ENCODE measurements at regions of chr15 and their contacts with region 1.

Region 1: DNA sequence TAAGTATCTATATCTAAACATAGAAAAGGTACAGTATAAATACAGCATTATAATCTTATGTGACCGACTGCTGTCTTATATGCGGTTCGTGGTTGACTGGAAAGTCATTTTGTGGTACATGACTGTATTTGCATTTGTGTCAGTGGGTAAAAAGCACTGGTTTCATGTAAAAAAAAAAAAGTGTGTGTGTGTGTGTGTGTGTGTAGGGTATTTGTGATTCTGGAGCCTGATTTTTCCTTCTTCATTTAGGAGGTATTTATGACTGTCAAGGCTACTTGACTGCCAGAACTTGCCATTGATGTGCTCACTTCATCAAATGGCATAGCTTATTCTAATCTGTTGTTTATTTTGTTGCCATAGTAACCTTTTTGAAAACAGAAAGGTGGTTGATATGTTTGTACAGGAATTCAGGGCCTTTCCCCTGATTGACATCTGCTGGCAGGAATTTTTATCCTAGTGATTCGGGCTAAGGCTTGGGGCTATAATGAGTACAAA is 63.2 kb downstream of the AKAP13 start:
- DNase-seq: peak; percentile 77
- ATAC-seq: peak; percentile 71
- H3K4me3 ChIP-seq: peak overlapping the region in 1 of 5 experiments; percentile 46
- H3K4me3 Mint-ChIP-seq: peak overlapping the region; percentile 64
- H3K27ac ChIP-seq: peak overlapping the region; percentile 53 to 80
- H3K27ac Mint-ChIP-seq: peak overlapping the region; percentile 82
- H3K4me1 ChIP-seq: peaks cover 35 to 41% of the 10 kb centered on the region in 2 donors
- H3K4me1 Mint-ChIP-seq: peaks cover 68% of the 10 kb centered on the region
- H3K27me3 ChIP-seq: no peaks in the 10 kb centered on the region
- H3K27me3 Mint-ChIP-seq: no peaks in the 10 kb centered on the region
- CTCF ChIP-seq: no peak

Region 2: DNA sequence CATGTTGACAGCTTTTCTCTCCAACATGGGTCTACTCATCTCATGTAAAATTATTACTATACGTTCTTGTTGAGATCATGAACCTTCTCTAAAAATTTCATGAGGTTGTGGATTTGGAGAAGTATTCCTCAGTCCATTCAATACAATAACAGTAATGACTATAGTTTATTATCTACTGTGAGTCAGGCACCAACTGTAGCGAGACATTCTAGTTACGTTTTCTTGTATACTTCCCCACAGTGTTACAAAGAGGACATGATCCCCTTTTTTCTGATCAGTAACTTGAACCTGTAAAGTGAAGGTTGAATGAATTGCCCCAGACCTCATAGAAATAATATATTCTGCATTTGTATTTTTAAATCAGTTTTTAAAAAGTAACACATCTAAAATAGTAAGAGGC is 13.2 kb after region 1 on chr15:
- CTCF ChIA-PET with region 1: interaction called, 4 read pairs
- POLR2A ChIA-PET with region 1: interaction called, 4 read pairs
- intact Hi-C with region 1: loop called (anchors 2 kb)
- DNase-seq: peak; percentile 59
- ATAC-seq: peak; percentile 46
- H3K4me3 ChIP-seq: peak overlapping the region in 1 of 5 experiments; percentile 28
- H3K4me3 Mint-ChIP-seq: peak overlapping the region; percentile 63
- H3K27ac ChIP-seq: peak overlapping the region; percentile 68 to 86
- H3K27ac Mint-ChIP-seq: peak overlapping the region; percentile 53
- H3K4me1 ChIP-seq: peaks cover 77 to 78% of the 10 kb centered on the region in 2 donors
- H3K4me1 Mint-ChIP-seq: peaks cover 82% of the 10 kb centered on the region
- H3K27me3 ChIP-seq: no peaks in the 10 kb centered on the region
- H3K27me3 Mint-ChIP-seq: no peaks in the 10 kb centered on the region
- CTCF ChIP-seq: no peak

Measured in B cell (primary cell).